ENCODE measurements at regions of chr10 and their contacts with region 1.

Region 1: DNA sequence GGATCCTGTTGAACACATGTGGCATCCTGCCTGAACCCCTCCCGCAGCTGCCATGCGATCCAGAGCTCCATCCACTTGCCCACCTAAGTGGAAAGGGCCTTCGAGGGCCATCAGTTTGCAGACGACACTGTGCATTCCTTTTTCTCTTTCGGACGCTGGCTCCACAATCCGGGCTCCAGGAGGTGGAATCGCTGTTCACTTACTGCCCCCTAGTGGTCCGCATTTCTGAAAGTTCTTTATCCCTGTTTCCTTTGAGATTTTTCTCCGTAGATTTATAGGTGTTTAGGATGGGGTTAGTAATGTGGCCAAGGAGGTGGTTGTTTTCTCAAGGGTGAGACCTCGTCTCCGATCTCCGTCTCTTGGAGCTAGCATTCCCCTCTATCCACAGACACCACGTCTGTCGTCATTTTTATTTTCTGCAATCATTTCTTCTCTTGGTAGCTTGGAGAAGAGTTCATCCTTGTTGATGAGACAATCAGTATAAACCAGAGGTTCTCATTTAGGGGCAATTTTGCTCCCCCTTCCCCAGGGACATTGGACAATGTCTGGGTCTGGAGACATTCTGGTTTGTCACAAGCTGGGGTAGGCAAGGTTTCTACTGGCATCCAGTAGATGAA is 204.6 kb downstream of the ARHGAP21 start:
- DNase-seq: peak; percentile 67
- ATAC-seq: peak; percentile 60
- H3K4me3 Mint-ChIP-seq: no peak overlapping the region
- H3K27ac Mint-ChIP-seq: no peak overlapping the region
- H3K4me1 Mint-ChIP-seq: peaks cover 12% of the 10 kb centered on the region
- H3K27me3 Mint-ChIP-seq: no peaks in the 10 kb centered on the region
- CTCF ChIP-seq: peak; percentile 66

Region 2: GRCh38 chr10:24383681-24384106 is 135.4 kb before region 1 on chr10:
- CTCF ChIA-PET with region 1: interaction called, 11 read pairs
- POLR2A ChIA-PET with region 1: no interaction called
- DNase-seq: peak; percentile 83
- ATAC-seq: peak; percentile 89
- H3K4me3 Mint-ChIP-seq: no peak overlapping the region
- H3K27ac Mint-ChIP-seq: peak overlapping the region; percentile 95
- H3K4me1 Mint-ChIP-seq: peaks cover 47% of the 10 kb centered on the region
- H3K27me3 Mint-ChIP-seq: no peaks in the 10 kb centered on the region
- CTCF ChIP-seq: peak; percentile 37; the same call in 1 of the 2 replicates

Region 3: DNA sequence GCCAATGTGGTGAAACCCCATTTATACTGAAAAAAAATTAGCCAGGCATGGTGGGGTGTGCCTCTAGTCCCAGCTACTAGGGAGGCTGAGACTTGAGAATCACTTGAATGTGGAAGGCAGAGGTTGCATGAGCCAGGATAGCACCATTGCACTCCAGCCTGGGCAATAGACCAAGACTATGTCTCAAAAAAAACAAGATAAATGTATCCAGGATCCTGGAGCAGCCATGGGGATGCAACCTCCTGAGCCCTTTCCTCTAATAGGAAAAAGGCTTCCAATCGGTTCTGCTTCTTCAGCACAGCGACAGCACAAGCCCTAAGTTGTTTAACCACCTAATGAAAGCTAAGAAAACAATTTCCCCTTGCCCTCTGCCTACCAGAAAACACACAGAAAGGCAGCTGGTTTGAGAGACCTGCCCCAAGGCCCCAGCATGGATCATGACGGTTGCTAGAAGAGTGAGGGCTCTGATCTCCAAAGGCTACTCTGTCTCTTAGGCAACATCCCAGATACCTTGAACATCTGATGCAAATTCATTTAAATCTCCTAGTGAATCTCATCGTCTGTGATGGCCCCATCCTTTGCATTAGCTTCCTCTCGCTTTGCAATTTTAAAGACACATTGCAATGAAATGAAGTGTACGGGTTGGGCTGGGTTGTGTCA is 16.2 kb before region 1 on chr10:
- CTCF ChIA-PET with region 1: interaction called, 10 read pairs
- POLR2A ChIA-PET with region 1: no interaction called
- DNase-seq: no peak
- ATAC-seq: peak; percentile 15; the same call in 1 of the 2 replicates
- H3K4me3 Mint-ChIP-seq: no peak overlapping the region
- H3K27ac Mint-ChIP-seq: peak overlapping the region; percentile 44; the same call in 1 of the 2 replicates
- H3K4me1 Mint-ChIP-seq: peaks cover 8% of the 10 kb centered on the region
- H3K27me3 Mint-ChIP-seq: no peaks in the 10 kb centered on the region
- CTCF ChIP-seq: no peak

Region 4: GRCh38 chr10:24552346-24553016 is 33.4 kb after region 1 on chr10:
- CTCF ChIA-PET with region 1: interaction called, 15 read pairs
- POLR2A ChIA-PET with region 1: no interaction called
- DNase-seq: peak; percentile 99
- ATAC-seq: peak; percentile 99
- H3K4me3 Mint-ChIP-seq: no peak overlapping the region
- H3K27ac Mint-ChIP-seq: no peak overlapping the region
- H3K4me1 Mint-ChIP-seq: peaks cover 30% of the 10 kb centered on the region
- H3K27me3 Mint-ChIP-seq: peaks cover 2% of the 10 kb centered on the region; the same call in 1 of the 2 replicates
- CTCF ChIP-seq: peak; percentile 81

Region 5: GRCh38 chr10:24625778-24626177 is 106.7 kb after region 1 on chr10:
- CTCF ChIA-PET with region 1: no interaction called
- POLR2A ChIA-PET with region 1: no interaction called
- DNase-seq: no peak
- ATAC-seq: no peak
- H3K4me3 Mint-ChIP-seq: no peak overlapping the region
- H3K27ac Mint-ChIP-seq: no peak overlapping the region
- H3K4me1 Mint-ChIP-seq: no peaks in the 10 kb centered on the region
- H3K27me3 Mint-ChIP-seq: no peaks in the 10 kb centered on the region
- CTCF ChIP-seq: no peak